SK-N-SH (cell line): ENCODE measurements at regions of chr7 and their contacts with region 1.

Region 1: DNA sequence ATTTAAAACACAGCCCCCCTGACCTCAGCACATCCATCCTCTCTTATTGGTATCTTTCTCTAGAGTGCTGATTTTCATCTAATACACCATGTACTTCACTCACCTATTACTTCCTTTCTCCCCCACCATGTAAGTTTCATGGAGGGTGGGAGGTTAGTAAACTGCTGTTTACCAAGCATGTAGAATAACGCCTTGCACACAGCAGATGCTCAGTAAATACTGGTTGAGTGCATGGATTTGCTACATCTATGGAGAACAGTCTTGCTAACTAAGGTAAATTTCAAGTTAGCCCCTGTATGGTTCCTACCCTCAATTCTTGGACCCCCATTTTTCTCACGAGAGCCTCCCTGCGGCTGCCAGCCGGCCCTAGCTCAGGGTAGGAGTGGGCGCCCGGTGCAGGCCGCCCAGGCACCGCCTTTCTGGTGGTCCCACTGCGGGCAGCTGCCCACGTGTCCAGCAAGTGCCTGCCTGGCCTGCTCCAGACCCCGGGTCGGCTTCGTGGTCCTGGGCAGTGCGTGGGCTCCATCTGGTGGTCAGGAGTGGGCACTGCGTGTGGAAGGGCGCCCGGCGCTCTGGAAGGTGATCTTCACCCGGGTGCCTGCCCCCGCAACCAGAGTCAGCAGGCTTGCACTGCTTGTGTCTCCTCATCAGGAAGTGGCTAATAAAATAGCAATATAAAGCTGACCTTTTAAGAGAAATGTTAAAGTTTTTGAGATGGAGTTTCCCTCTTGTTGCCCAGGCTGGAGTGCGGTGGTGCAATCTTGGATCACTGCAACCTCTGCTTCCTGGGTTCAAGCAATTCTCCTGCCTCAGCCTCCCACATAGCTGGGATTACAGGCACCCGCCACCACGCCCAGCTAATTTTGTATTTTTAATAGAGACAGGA is 63.4 kb upstream of the DNAJB6 start:
- DNase-seq: peak; percentile 99
- H3K4me3 ChIP-seq: no peak overlapping the region; a peak in 1 of 4 replicates
- H3K27ac ChIP-seq: no peak overlapping the region
- H3K4me1 ChIP-seq: peaks cover 24 to 27% of the 10 kb centered on the region in 2 experiments; a peak in 3 of 4 replicates
- H3K27me3 ChIP-seq: no peaks in the 10 kb centered on the region
- CTCF ChIP-seq: peak; percentile 99
- EP300 ChIP-seq: no peak
- RAD21 ChIP-seq: peak; percentile 97

Region 2: DNA sequence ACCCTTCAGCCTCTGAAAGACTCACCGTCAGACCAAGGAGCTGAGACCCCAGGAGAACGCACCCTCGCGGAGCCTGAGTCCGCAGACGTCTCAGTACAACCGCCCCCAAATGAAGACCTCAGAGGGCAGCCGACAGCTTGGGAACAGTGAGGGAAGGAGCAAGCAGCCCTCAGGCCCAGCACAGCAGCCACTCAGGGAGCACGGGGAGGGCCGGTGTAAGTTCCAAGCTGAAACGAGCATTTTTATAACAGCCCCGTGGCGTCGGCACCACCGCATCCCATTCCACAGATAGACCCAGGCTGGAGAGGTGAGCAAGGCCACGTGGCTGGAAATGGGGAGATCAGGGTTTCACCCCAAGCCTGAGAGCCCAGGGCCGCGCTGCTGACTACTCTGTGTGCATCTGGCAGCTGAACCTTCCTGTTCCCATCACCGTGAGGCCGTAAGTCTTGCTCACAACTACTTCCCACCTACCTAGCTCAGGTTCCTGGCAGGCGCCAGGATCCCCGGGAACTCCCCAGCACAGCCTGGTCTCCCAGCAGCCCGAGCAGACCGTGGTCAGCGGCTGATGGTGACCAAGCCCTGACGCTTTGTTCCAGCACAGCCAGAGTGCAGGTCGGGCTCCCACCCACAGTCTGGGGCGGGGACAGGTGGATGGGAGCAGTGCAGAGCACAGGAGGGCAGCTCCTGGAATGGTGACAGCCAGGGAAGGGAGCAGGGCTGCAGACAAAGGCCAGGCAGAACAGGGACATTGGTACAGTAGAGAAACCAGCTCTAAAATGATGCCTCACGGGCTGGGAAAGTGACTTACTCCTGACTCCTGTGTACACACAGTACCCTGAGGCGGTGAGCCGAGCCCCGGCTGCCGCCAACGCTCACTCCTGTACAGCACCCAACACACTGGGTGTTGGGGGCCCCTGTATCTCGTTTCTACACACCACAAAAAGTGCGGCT is 330.1 kb before region 1 on chr7:
- CTCF ChIA-PET with region 1: interaction called, 10 read pairs
- POLR2A ChIA-PET with region 1: no interaction called
- DNase-seq: no peak
- H3K4me3 ChIP-seq: no peak overlapping the region
- H3K27ac ChIP-seq: no peak overlapping the region
- H3K4me1 ChIP-seq: no peaks in the 10 kb centered on the region
- H3K27me3 ChIP-seq: 0 out of 2 replicates have a peak, but pooled peaks cover 7% of the 10 kb centered on the region
- CTCF ChIP-seq: no peak
- EP300 ChIP-seq: no peak
- RAD21 ChIP-seq: no peak

Region 3: GRCh38 chr7:156979711-156980110 is 293.7 kb before region 1 on chr7:
- CTCF ChIA-PET with region 1: interaction called, 120 read pairs
- POLR2A ChIA-PET with region 1: no interaction called
- DNase-seq: no peak
- H3K4me3 ChIP-seq: no peak overlapping the region
- H3K27ac ChIP-seq: no peak overlapping the region
- H3K4me1 ChIP-seq: no peaks in the 10 kb centered on the region
- H3K27me3 ChIP-seq: no peaks in the 10 kb centered on the region
- CTCF ChIP-seq: no peak
- EP300 ChIP-seq: no peak
- RAD21 ChIP-seq: no peak

Region 4: DNA sequence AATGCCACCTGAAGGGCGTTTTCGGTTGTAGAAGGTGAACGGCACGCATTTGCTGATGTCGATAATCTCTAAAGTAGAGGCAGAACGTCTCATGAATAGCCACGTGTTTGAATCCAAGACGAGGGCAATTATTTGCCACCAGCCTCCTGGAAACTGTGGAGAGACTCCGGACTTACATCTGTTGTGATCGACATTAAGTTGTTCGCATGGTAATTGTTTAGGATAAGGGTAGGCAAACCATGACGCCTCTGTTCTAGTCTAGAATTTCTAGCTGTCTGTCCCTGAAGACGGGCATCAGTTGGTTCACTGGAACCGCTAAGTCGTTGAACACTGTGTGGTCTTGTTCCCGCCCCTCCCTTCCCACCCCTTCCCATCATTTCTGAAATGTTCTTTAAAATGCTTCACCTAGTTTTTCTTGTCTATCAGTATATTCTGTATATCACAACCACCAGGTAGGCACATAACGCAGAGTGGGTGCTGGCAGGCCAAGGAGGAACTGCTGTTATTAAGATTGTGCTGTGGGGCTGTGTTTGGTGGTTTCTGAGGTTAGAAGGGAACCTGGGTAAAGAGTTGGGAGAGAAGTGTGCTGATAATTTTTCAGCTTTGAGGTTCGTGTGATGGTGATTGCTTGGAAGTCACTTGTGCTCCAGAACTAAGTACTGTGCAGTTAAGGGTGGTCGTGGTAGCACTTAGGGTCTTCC is 133.5 kb before region 1 on chr7:
- CTCF ChIA-PET with region 1: interaction called, 11 read pairs
- POLR2A ChIA-PET with region 1: no interaction called
- DNase-seq: no peak
- H3K4me3 ChIP-seq: peak overlapping the region; percentile 82 to 93
- H3K27ac ChIP-seq: peak overlapping the region; percentile 70 to 91; a peak in 3 of 4 replicates
- H3K4me1 ChIP-seq: peaks cover 11 to 27% of the 10 kb centered on the region in 2 experiments; a peak in 2 of 4 replicates
- H3K27me3 ChIP-seq: no peaks in the 10 kb centered on the region
- CTCF ChIP-seq: no peak
- EP300 ChIP-seq: no peak
- RAD21 ChIP-seq: no peak

Region 5: DNA sequence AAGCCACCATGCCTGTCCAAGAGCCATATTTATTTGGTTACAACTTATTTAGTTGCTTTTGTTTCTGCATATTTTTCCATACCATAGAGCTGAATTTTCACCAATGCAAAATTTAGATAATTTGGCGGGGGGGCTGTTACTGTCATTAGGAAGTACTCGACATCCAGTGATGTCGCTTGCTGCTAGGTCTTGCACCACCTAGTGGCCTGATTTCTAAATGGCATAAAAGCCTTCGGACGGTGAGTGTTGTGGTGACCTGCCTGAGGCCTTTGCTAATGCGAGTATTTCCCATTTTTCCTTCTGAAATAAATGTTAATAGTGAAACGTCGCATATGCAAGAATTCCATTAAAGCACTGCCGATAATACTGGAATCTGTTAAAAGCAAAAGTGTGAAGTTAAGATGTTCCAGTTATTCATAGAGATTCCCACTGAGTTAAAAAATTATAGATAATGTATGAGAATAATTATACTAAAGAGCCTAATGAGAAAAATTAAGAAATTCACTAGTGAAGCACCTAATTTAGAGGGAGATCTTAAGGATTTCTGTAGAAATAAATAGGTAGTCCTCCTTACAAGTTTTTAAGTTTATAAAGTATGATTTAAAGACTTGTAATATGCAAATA is 22.7 kb before region 1 on chr7:
- CTCF ChIA-PET with region 1: interaction called, 87 read pairs
- POLR2A ChIA-PET with region 1: no interaction called
- DNase-seq: peak; percentile 78
- H3K4me3 ChIP-seq: no peak overlapping the region
- H3K27ac ChIP-seq: no peak overlapping the region
- H3K4me1 ChIP-seq: no peaks in the 10 kb centered on the region; a peak in 2 of 4 replicates
- H3K27me3 ChIP-seq: no peaks in the 10 kb centered on the region
- CTCF ChIP-seq: peak; percentile 99
- EP300 ChIP-seq: no peak
- RAD21 ChIP-seq: peak; percentile 68

Region 6: GRCh38 chr7:157336383-157337315 is 63.2 kb after region 1 on chr7 and contains the start of gene DNAJB6:
- CTCF ChIA-PET with region 1: interaction called, 42 read pairs
- POLR2A ChIA-PET with region 1: no interaction called
- DNase-seq: peak; percentile 100
- H3K4me3 ChIP-seq: peak within 1 kb of the TSS; percentile 62 to 81
- H3K27ac ChIP-seq: peak within 1 kb of the TSS; percentile 76 to 89
- H3K4me1 ChIP-seq: peaks cover 20% of the 10 kb centered on the region in 2 experiments
- H3K27me3 ChIP-seq: no peaks in the 10 kb centered on the region
- CTCF ChIP-seq: no peak
- EP300 ChIP-seq: peak; percentile 39 to 94; a peak in 3 of 4 replicates
- RAD21 ChIP-seq: no peak
- polyA plus RNA-seq, gene DNAJB6: 176 and 185 TPM in 2 replicates